GM13977 (cell line): ENCODE measurements at regions of chr20 and their contacts with region 1.

Region 1: GRCh38 chr20:13819885-13820645 is 35.2 kb downstream of the NDUFAF5 start:
- DNase-seq: peak; percentile 65
- CTCF ChIP-seq: peak; percentile 47

Region 2: GRCh38 chr20:14055127-14055742 is 235.2 kb after region 1 on chr20:
- in situ Hi-C with region 1: loop called (anchors 25 kb)
- DNase-seq: peak; percentile 29
- CTCF ChIP-seq: peak; percentile 59